Upper lobe of right lung (tissue), 1 donor: ENCODE measurements at regions of chr9 and their contacts with region 1.

Region 1: GRCh38 chr9:120875954-120876841 is 790 bp downstream of the PHF19 start:
- DNase-seq: peak; percentile 90
- ATAC-seq: peak; percentile 82
- H3K4me3 ChIP-seq: peak overlapping the region; percentile 76
- H3K27ac ChIP-seq: peak overlapping the region; percentile 90
- H3K4me1 ChIP-seq: no peaks in the 10 kb centered on the region
- H3K27me3 ChIP-seq: no peaks in the 10 kb centered on the region
- CTCF ChIP-seq: no peak

Region 2: GRCh38 chr9:120545701-120546550 is 330.3 kb before region 1 on chr9:
- intact Hi-C with region 1: no loop called
- DNase-seq: no peak
- ATAC-seq: no peak
- H3K4me3 ChIP-seq: no peak overlapping the region
- H3K27ac ChIP-seq: no peak overlapping the region
- H3K4me1 ChIP-seq: no peaks in the 10 kb centered on the region
- H3K27me3 ChIP-seq: no peaks in the 10 kb centered on the region
- CTCF ChIP-seq: no peak

Region 3: DNA sequence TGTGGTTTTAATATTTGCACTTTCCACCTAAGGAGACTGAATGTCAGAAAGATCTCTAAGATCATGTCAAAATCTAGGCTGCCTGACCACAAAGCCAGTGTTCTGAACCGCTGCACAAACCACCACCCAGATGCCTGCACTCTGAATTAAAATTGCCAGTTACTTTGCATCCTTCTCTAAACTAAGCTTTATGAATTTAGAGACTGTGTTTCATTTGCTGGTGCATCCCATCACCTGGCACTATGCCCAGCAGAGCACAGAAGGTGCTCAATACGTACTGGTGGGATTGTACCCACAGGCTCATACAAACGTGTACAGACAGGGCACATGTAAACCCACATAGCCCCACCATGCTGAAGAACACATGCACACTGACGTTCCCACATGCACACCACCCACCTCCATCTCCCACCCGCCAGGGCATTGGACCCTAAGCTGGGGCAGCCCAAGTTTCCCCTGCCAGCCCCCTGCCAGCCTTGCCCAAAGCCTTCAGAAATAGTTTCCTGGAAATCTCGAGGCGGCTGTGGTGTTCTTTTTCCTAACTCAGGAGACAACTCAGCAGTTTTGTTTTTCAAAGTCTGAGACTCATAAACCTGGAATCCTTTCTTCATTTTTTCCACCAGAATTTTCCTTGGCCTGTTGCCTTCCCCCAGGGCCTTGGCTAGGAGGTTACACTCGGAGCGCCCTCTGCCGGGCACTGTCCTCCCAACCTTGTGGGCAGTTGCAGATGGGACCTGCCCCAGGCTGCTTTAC is 60.0 kb after region 1 on chr9:
- intact Hi-C with region 1: loop called (anchors 10 kb)
- DNase-seq: peak; percentile 96
- ATAC-seq: peak; percentile 91
- H3K4me3 ChIP-seq: no peak overlapping the region
- H3K27ac ChIP-seq: peak overlapping the region; percentile 69
- H3K4me1 ChIP-seq: peaks cover 59% of the 10 kb centered on the region
- H3K27me3 ChIP-seq: no peaks in the 10 kb centered on the region
- CTCF ChIP-seq: peak; percentile 96